Activated CD4-positive, alpha-beta memory T cell treated with anti-CD3 and anti-CD28 coated beads for 36 hours (primary cell): ENCODE measurements at regions of chr16 and their contacts with region 1.

Region 1: GRCh38 chr16:87492721-87493607 is at the start of gene ZCCHC14:
- DNase-seq: peak; percentile 100
- H3K4me3 Mint-ChIP-seq: peak within 1 kb of the TSS; percentile 74
- H3K27ac Mint-ChIP-seq: peak within 1 kb of the TSS; percentile 55
- H3K4me1 Mint-ChIP-seq: peaks cover 48% of the 10 kb centered on the region
- H3K27me3 Mint-ChIP-seq: no peaks in the 10 kb centered on the region
- total RNA-seq, gene ZCCHC14: 8.7 to 10.6 TPM

Region 2: DNA sequence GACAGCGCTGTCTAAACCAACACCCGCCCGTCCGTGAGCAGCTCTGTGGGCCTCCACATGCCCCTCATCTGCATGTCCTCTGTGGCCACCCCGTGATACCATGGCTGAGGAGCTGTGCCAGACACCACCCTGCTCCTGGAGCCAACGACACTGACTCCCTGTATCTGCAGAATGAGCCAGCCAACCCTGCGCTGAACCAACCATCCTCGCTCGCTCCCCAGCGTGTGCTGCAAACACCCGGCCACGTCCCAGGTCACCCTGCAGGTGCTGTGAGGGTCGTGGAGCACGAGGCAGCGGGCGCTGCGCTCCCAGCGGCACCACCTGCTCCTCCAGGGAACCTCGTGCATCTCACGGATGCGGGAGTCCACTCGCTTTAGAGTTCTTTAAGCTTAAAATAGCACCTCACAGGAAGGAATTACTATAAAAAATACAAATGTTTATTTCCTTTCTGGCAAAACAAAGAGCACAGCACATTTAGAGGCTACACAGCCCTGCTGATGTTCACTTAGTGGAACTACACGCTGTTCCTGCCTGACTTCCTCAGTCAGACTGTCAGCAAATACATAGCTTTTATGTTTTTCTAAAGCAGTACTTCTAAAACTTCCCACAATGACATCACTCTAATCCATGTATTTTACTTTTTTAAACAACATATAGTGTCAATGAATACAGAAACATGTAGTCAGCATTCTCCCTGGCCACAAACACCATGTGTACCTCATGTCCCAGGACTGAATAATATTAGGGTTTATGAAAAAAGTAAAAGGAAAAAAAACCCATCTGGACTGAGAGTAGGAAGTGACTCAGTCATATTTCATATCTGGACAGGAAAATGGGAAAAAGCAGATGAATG is 57.4 kb before region 1 on chr16:
- CTCF ChIA-PET with region 1: no interaction called
- POLR2A ChIA-PET with region 1: no interaction called
- intact Hi-C with region 1: loop called (anchors 1 kb)
- DNase-seq: no peak
- H3K4me3 Mint-ChIP-seq: peak overlapping the region; percentile 26
- H3K27ac Mint-ChIP-seq: no peak overlapping the region
- H3K4me1 Mint-ChIP-seq: peaks cover 20% of the 10 kb centered on the region
- H3K27me3 Mint-ChIP-seq: no peaks in the 10 kb centered on the region

Region 3: GRCh38 chr16:87464691-87465300 is 28.2 kb before region 1 on chr16:
- CTCF ChIA-PET with region 1: no interaction called
- POLR2A ChIA-PET with region 1: interaction called, 9 read pairs
- intact Hi-C with region 1: loop called (anchors 1 kb)
- DNase-seq: peak; percentile 77
- H3K4me3 Mint-ChIP-seq: peak overlapping the region; percentile 68
- H3K27ac Mint-ChIP-seq: peak overlapping the region; percentile 91
- H3K4me1 Mint-ChIP-seq: peaks cover 47% of the 10 kb centered on the region
- H3K27me3 Mint-ChIP-seq: no peaks in the 10 kb centered on the region

Region 4: DNA sequence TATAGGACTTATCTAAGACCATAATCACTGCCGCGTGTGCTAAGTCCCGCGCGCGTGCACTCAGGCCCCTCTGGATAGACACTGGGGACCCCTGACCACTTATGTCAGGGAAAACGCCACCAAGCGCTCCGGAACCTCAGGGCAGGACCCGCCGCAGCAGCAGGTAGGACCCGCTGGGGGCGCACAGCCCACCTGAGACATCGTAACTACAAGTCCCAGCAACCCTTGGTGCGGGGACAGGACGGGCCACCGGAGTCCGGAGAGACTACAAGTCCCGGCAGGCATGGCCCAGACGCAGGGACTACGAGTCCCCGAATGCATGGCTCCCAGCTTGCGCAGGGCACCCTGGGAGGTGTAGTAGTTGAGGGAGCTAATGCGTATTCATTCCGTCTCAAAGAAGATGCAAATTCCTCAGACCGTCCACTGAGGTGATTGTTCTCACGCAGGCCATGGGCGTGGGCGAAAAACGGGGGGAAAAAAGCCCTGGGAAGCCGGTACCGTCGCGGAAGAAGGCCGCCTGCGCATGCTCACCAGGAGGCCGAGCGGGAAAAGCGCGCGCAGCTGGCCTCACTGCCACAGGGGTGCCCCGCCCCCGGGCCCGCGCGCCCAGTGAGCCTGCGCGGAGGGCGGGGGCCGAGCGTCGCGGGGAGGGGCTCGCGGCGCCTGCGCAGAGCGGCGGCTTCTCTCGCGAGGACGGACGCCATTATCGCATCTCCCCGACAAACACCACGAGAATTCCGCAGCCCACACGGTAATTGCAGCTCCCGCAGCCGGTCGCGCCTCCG is 458.0 kb after region 1 on chr16 and contains the start of gene BANP:
- CTCF ChIA-PET with region 1: no interaction called
- POLR2A ChIA-PET with region 1: no interaction called
- intact Hi-C with region 1: loop called (anchors 5 kb)
- DNase-seq: peak; percentile 98
- H3K4me3 Mint-ChIP-seq: peak within 1 kb of the TSS; percentile 96
- H3K27ac Mint-ChIP-seq: peak within 1 kb of the TSS; percentile 100
- H3K4me1 Mint-ChIP-seq: peaks cover 43% of the 10 kb centered on the region
- H3K27me3 Mint-ChIP-seq: peaks cover 2% of the 10 kb centered on the region
- total RNA-seq, gene BANP: 29.6 to 30.6 TPM